Endothelial cell of umbilical vein (primary cell): ENCODE measurements at regions of chr1 and their contacts with region 1.

Region 1: GRCh38 chr1:75529488-75529887 is 81.4 kb downstream of the SLC44A5 start:
- DNase-seq: peak; percentile 40
- H3K4me3 ChIP-seq: no peak overlapping the region
- H3K27ac ChIP-seq: no peak overlapping the region
- H3K4me1 ChIP-seq: peaks cover 29% of the 10 kb centered on the region
- H3K27me3 ChIP-seq: no peaks in the 10 kb centered on the region
- CTCF ChIP-seq: no peak
- POLR2A ChIP-seq: no peak

Region 2: GRCh38 chr1:75482951-75483350 is 46.5 kb before region 1 on chr1:
- CTCF ChIA-PET with region 1: no interaction called
- POLR2A ChIA-PET with region 1: no interaction called
- dilution Hi-C with region 1: no loop called
- intact Hi-C with region 1: loop called (anchors 2 kb)
- DNase-seq: peak; percentile 80
- H3K4me3 ChIP-seq: no peak overlapping the region
- H3K27ac ChIP-seq: peak overlapping the region; percentile 1
- H3K4me1 ChIP-seq: peaks cover 11% of the 10 kb centered on the region
- H3K27me3 ChIP-seq: no peaks in the 10 kb centered on the region
- CTCF ChIP-seq: no peak
- POLR2A ChIP-seq: no peak

Region 3: GRCh38 chr1:75502776-75503175 is 26.7 kb before region 1 on chr1:
- CTCF ChIA-PET with region 1: no interaction called
- POLR2A ChIA-PET with region 1: no interaction called
- dilution Hi-C with region 1: no loop called
- intact Hi-C with region 1: loop called (anchors 2 kb)
- DNase-seq: peak; percentile 94
- H3K4me3 ChIP-seq: peak overlapping the region in 1 of 3 experiments; percentile 11
- H3K27ac ChIP-seq: peak overlapping the region; percentile 85
- H3K4me1 ChIP-seq: peaks cover 13% of the 10 kb centered on the region
- H3K27me3 ChIP-seq: no peaks in the 10 kb centered on the region
- CTCF ChIP-seq: no peak
- POLR2A ChIP-seq: no peak

Region 4: GRCh38 chr1:75615613-75616435 is 86.3 kb after region 1 on chr1:
- CTCF ChIA-PET with region 1: interaction called, 5 read pairs
- POLR2A ChIA-PET with region 1: no interaction called
- dilution Hi-C with region 1: no loop called
- intact Hi-C with region 1: loop called (anchors 5 kb)
- DNase-seq: peak; percentile 74
- H3K4me3 ChIP-seq: peak overlapping the region; percentile 80 to 84 (median 82)
- H3K27ac ChIP-seq: no peak overlapping the region
- H3K4me1 ChIP-seq: peaks cover 12% of the 10 kb centered on the region
- H3K27me3 ChIP-seq: peaks cover 0 to 3% of the 10 kb centered on the region in 2 experiments
- CTCF ChIP-seq: no peak
- POLR2A ChIP-seq: no peak